ENCODE measurements at regions of chr2 and their contacts with region 1.

Region 1: GRCh38 chr2:105398699-105399432 is at the start of gene FHL2:
- DNase-seq: peak; percentile 80
- ATAC-seq: peak; percentile 88
- H3K4me3 ChIP-seq: peak within 1 kb of the TSS; percentile 99
- H3K27ac ChIP-seq: peak within 1 kb of the TSS; percentile 100
- H3K4me1 ChIP-seq: peaks cover 21% of the 10 kb centered on the region
- H3K27me3 ChIP-seq: no peaks in the 10 kb centered on the region
- CTCF ChIP-seq: peak; percentile 60
- POLR2A ChIP-seq: peak; percentile 95
- RAD21 ChIP-seq: peak; percentile 34; the same call in 1 of the 2 replicates
- total RNA-seq, gene FHL2: 373 and 464 TPM in 2 replicates

Region 2: DNA sequence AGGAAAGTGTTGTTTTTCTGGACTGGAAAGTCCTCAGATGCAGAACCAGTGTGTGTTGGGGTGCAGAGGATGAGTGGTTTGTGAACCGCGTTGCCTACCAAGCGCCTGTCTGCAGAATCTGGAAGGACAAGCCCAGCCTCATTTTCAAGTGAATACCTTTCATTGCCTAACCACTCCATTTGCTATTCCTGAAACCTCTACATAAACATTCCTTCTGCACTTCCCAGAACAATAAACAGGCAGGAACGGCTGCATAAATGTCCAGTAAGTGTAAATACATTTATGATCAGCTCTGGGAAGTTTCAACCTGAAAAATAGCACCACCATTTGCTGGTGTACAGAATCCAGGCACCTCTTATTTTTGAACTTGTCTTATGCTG is 45.3 kb after region 1 on chr2:
- CTCF ChIA-PET with region 1: no interaction called
- POLR2A ChIA-PET with region 1: no interaction called
- dilution Hi-C with region 1: no loop called
- in situ Hi-C with region 1: no loop called
- intact Hi-C with region 1: loop called (anchors 2 kb)
- DNase-seq: peak; percentile 50
- ATAC-seq: peak; percentile 70
- H3K4me3 ChIP-seq: no peak overlapping the region
- H3K27ac ChIP-seq: peak overlapping the region; percentile 35; the same call in 1 of the 2 replicates
- H3K4me1 ChIP-seq: peaks cover 14% of the 10 kb centered on the region
- H3K27me3 ChIP-seq: peaks cover 16% of the 10 kb centered on the region
- CTCF ChIP-seq: no peak
- POLR2A ChIP-seq: no peak
- RAD21 ChIP-seq: no peak

Region 3: GRCh38 chr2:105454801-105455485 is 56.1 kb after region 1 on chr2:
- CTCF ChIA-PET with region 1: interaction called, 3 read pairs
- POLR2A ChIA-PET with region 1: no interaction called
- dilution Hi-C with region 1: no loop called
- in situ Hi-C with region 1: no loop called
- intact Hi-C with region 1: loop called (anchors 2 kb)
- DNase-seq: peak; percentile 61
- ATAC-seq: peak; percentile 67
- H3K4me3 ChIP-seq: no peak overlapping the region
- H3K27ac ChIP-seq: peak overlapping the region; percentile 20; the same call in 1 of the 2 replicates
- H3K4me1 ChIP-seq: peaks cover 10% of the 10 kb centered on the region
- H3K27me3 ChIP-seq: peaks cover 27% of the 10 kb centered on the region
- CTCF ChIP-seq: peak; percentile 37
- POLR2A ChIP-seq: no peak
- RAD21 ChIP-seq: no peak

Region 4: GRCh38 chr2:105521205-105521604 is 122.3 kb after region 1 on chr2:
- CTCF ChIA-PET with region 1: interaction called, 3 read pairs
- POLR2A ChIA-PET with region 1: interaction called, 4 read pairs
- dilution Hi-C with region 1: no loop called
- in situ Hi-C with region 1: no loop called
- intact Hi-C with region 1: loop called (anchors 2 kb)
- DNase-seq: peak; percentile 15
- ATAC-seq: peak; percentile 43
- H3K4me3 ChIP-seq: no peak overlapping the region
- H3K27ac ChIP-seq: no peak overlapping the region
- H3K4me1 ChIP-seq: peaks cover 2% of the 10 kb centered on the region; the same call in 1 of the 2 replicates
- H3K27me3 ChIP-seq: peaks cover 7% of the 10 kb centered on the region; the same call in 1 of the 2 replicates
- CTCF ChIP-seq: peak; percentile 62
- POLR2A ChIP-seq: no peak
- RAD21 ChIP-seq: peak; percentile 76

Measured in IMR-90 (cell line).